ENCODE measurements at regions of chr12 and their contacts with region 1.

Region 1: GRCh38 chr12:949453-950191 is at the start of gene RAD52:
- DNase-seq: peak; percentile 97
- H3K4me3 Mint-ChIP-seq: peak within 1 kb of the TSS; percentile 98
- H3K27ac Mint-ChIP-seq: peak within 1 kb of the TSS; percentile 94
- H3K4me1 Mint-ChIP-seq: peaks cover 26% of the 10 kb centered on the region
- H3K27me3 Mint-ChIP-seq: no peaks in the 10 kb centered on the region
- CTCF ChIP-seq: peak; percentile 87
- total RNA-seq, gene RAD52: 22.2 and 27.1 TPM in 2 replicates

Region 2: GRCh38 chr12:569803-570434 is 379.7 kb before region 1 on chr12:
- CTCF ChIA-PET with region 1: interaction called, 7 read pairs
- intact Hi-C with region 1: loop called (anchors 5 kb)
- DNase-seq: peak; percentile 91
- H3K4me3 Mint-ChIP-seq: peak overlapping the region; percentile 80
- H3K27ac Mint-ChIP-seq: no peak overlapping the region
- H3K4me1 Mint-ChIP-seq: peaks cover 17% of the 10 kb centered on the region
- H3K27me3 Mint-ChIP-seq: peaks cover 17% of the 10 kb centered on the region
- CTCF ChIP-seq: peak; percentile 92

Region 3: GRCh38 chr12:662566-663292 is 286.9 kb before region 1 on chr12:
- CTCF ChIA-PET with region 1: no interaction called
- intact Hi-C with region 1: no loop called
- DNase-seq: no peak
- H3K4me3 Mint-ChIP-seq: no peak overlapping the region
- H3K27ac Mint-ChIP-seq: no peak overlapping the region
- H3K4me1 Mint-ChIP-seq: peaks cover 10% of the 10 kb centered on the region
- H3K27me3 Mint-ChIP-seq: peaks cover 44% of the 10 kb centered on the region
- CTCF ChIP-seq: no peak

Region 4: DNA sequence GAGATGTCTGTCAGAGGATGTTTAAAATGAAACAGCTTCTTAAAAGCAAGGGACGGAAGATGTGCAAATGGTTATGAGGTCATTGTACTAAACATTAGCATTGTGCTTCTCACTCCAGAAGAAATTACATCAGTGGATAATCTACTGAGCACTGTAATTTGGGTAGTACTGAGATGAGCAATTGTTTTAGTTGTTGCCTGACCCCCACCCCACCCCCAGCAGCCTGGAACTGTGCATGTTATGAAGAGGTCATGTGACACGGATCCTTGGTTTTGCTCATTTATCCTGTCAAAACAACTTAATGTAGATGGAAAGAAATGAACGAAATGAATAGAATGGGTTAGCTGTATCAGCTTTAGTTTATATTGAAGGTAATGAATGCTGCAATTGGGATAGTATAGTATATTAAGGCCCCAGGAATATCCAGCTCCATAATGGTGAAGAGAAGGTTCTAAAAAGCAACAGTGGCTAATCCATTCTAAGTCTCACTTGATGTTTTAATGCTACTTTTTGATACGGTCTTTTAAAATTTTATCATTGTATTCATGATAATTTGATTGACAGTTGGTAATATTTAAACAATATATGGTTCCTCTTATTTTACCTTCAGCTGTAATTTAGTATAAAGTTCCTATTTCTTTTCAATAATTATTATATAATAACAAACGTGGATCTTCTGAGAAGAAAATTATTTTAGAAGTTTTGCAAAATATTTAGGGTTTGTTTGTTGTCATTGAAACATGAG is 138.8 kb before region 1 on chr12:
- CTCF ChIA-PET with region 1: no interaction called
- intact Hi-C with region 1: loop called (anchors 10 kb)
- DNase-seq: no peak
- H3K4me3 Mint-ChIP-seq: no peak overlapping the region
- H3K27ac Mint-ChIP-seq: no peak overlapping the region
- H3K4me1 Mint-ChIP-seq: peaks cover 21% of the 10 kb centered on the region
- H3K27me3 Mint-ChIP-seq: no peaks in the 10 kb centered on the region
- CTCF ChIP-seq: no peak

Region 5: GRCh38 chr12:1093166-1093751 is 143.6 kb after region 1 on chr12:
- CTCF ChIA-PET with region 1: interaction called, 22 read pairs
- intact Hi-C with region 1: loop called (anchors 5 kb)
- DNase-seq: peak; percentile 52
- H3K4me3 Mint-ChIP-seq: no peak overlapping the region
- H3K27ac Mint-ChIP-seq: no peak overlapping the region
- H3K4me1 Mint-ChIP-seq: peaks cover 12% of the 10 kb centered on the region
- H3K27me3 Mint-ChIP-seq: no peaks in the 10 kb centered on the region
- CTCF ChIP-seq: peak; percentile 45

Region 6: GRCh38 chr12:1435456-1435855 is 485.8 kb after region 1 on chr12:
- CTCF ChIA-PET with region 1: no interaction called
- intact Hi-C with region 1: no loop called
- DNase-seq: no peak
- H3K4me3 Mint-ChIP-seq: no peak overlapping the region
- H3K27ac Mint-ChIP-seq: no peak overlapping the region
- H3K4me1 Mint-ChIP-seq: peaks cover 18% of the 10 kb centered on the region
- H3K27me3 Mint-ChIP-seq: no peaks in the 10 kb centered on the region
- CTCF ChIP-seq: no peak

Measured in Calu3 (cell line).